Activated CD8-positive, alpha-beta memory T cell treated with anti-CD3 and anti-CD28 coated beads, Interleukin-2, amount 10 ng/mL, durations not matched to agents 7 days and 5 days (primary cell): ENCODE measurements at regions of chr19 and their contacts with region 1.

Region 1: GRCh38 chr19:14136509-14137281 is at the start of gene ASF1B:
- DNase-seq: peak; percentile 99
- ATAC-seq: peak; percentile 88
- H3K4me3 Mint-ChIP-seq: peak within 1 kb of the TSS; percentile 88
- H3K27ac Mint-ChIP-seq: peak within 1 kb of the TSS; percentile 94
- H3K4me1 Mint-ChIP-seq: peaks cover 34% of the 10 kb centered on the region
- H3K27me3 Mint-ChIP-seq: no peaks in the 10 kb centered on the region
- total RNA-seq, gene ASF1B: 117 to 124 TPM

Region 2: GRCh38 chr19:13880059-13881043 is 256.3 kb before region 1 on chr19:
- CTCF ChIA-PET with region 1: interaction called, 17 read pairs
- DNase-seq: peak; percentile 99
- ATAC-seq: peak; percentile 98
- H3K4me3 Mint-ChIP-seq: peak overlapping the region; percentile 25
- H3K27ac Mint-ChIP-seq: peak overlapping the region; percentile 70
- H3K4me1 Mint-ChIP-seq: peaks cover 37% of the 10 kb centered on the region
- H3K27me3 Mint-ChIP-seq: peaks cover 9% of the 10 kb centered on the region

Region 3: DNA sequence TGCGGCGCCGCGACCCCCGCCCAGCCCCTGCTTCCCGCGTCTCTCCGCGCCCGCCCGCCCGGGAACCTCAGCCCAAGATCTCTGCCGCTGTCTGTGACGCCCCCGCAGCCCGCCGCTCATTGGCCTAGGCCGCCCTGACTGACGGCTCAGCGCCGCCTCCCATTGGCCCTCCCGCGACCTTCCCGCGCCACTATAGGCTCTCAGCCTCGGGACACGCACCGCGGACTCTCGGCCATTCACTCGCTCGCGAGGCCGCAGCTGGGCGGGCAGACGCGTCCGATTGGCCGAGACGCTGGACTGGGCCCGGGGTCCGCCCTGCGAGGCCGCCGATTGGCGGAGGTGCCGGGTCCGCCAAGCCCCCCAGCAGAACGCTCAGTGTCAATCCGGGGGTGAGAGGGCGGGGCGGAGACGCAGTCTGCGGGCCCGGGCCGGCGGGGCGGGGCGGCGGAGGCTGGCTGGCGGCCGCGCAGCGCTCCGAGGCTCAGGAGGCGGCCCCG is 19.0 kb before region 1 on chr19 and contains the start of gene PRKACA:
- CTCF ChIA-PET with region 1: interaction called, 59 read pairs
- DNase-seq: peak; percentile 99
- ATAC-seq: peak; percentile 96
- H3K4me3 Mint-ChIP-seq: peak within 1 kb of the TSS; percentile 77
- H3K27ac Mint-ChIP-seq: peak within 1 kb of the TSS; percentile 66
- H3K4me1 Mint-ChIP-seq: peaks cover 42% of the 10 kb centered on the region
- H3K27me3 Mint-ChIP-seq: no peaks in the 10 kb centered on the region
- total RNA-seq, gene PRKACA: 42.3 to 65.4 TPM

Region 4: GRCh38 chr19:14167576-14168138 is 31.0 kb after region 1 on chr19:
- CTCF ChIA-PET with region 1: interaction called, 14 read pairs
- DNase-seq: no peak
- ATAC-seq: peak; percentile 56
- H3K4me3 Mint-ChIP-seq: peak overlapping the region; percentile 72
- H3K27ac Mint-ChIP-seq: no peak overlapping the region
- H3K4me1 Mint-ChIP-seq: peaks cover 22% of the 10 kb centered on the region
- H3K27me3 Mint-ChIP-seq: no peaks in the 10 kb centered on the region

Region 5: DNA sequence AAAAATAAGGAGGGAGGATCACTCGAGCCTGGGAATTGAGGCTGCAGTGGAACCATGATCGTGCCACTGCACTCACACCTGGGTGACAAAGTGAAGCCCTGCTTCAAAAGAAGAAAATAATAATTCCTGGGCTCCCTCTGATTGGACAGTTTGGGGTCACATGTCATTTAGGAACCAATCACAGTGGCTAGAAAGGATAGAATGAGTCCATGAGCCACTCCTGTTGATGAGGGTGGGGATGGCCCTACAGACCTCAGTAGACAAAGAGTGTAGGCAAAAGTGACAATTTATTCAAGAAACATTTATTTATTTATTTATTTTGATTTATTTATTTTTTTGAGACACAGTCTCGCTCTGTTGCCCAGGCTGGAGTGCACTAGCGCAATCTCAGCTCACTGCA is 217.8 kb after region 1 on chr19:
- CTCF ChIA-PET with region 1: interaction called, 38 read pairs
- DNase-seq: no peak
- ATAC-seq: no peak
- H3K4me3 Mint-ChIP-seq: no peak overlapping the region
- H3K27ac Mint-ChIP-seq: no peak overlapping the region
- H3K4me1 Mint-ChIP-seq: peaks cover 23% of the 10 kb centered on the region
- H3K27me3 Mint-ChIP-seq: no peaks in the 10 kb centered on the region

Region 6: DNA sequence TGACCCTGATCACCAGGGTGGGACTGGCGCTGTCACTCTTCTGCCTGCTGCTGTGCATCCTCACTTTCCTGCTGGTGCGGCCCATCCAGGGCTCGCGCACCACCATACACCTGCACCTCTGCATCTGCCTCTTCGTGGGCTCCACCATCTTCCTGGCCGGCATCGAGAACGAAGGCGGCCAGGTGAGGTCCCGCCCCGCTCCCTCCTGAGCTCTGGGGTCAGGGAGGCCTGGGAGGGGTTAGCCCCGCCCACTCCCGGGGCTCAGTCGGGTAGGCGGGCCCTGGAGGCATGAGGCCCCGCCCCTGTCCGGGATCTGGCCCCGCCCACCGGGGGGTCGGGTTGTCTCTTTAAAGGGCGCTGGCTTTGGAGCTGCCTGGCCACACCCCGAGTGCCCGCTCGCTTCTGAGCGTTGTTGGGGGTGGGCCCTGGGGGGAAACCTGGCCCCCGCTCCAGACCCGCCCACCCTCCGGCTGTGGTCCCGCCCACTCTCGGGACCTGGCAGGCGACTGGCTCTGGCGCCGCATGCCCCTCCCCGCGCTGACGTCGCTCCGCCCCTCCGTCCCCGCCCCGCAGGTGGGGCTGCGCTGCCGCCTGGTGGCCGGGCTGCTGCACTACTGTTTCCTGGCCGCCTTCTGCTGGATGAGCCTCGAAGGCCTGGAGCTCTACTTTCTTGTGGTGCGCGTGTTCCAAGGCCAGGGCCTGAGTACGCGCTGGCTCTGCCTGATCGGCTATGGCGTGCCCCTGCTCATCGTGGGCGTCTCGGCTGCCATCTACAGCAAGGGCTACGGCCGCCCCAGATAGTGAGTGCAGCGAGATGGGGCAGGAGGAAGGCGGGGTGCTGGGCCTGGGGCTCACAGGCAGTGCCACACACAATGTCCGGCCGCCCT is 269.3 kb after region 1 on chr19:
- CTCF ChIA-PET with region 1: interaction called, 20 read pairs
- DNase-seq: peak; percentile 94
- ATAC-seq: peak; percentile 80
- H3K4me3 Mint-ChIP-seq: no peak overlapping the region
- H3K27ac Mint-ChIP-seq: peak overlapping the region; percentile 52
- H3K4me1 Mint-ChIP-seq: peaks cover 38% of the 10 kb centered on the region
- H3K27me3 Mint-ChIP-seq: no peaks in the 10 kb centered on the region